Natural killer cell (primary cell): ENCODE measurements at regions of chr11 and their contacts with region 1.

Region 1: DNA sequence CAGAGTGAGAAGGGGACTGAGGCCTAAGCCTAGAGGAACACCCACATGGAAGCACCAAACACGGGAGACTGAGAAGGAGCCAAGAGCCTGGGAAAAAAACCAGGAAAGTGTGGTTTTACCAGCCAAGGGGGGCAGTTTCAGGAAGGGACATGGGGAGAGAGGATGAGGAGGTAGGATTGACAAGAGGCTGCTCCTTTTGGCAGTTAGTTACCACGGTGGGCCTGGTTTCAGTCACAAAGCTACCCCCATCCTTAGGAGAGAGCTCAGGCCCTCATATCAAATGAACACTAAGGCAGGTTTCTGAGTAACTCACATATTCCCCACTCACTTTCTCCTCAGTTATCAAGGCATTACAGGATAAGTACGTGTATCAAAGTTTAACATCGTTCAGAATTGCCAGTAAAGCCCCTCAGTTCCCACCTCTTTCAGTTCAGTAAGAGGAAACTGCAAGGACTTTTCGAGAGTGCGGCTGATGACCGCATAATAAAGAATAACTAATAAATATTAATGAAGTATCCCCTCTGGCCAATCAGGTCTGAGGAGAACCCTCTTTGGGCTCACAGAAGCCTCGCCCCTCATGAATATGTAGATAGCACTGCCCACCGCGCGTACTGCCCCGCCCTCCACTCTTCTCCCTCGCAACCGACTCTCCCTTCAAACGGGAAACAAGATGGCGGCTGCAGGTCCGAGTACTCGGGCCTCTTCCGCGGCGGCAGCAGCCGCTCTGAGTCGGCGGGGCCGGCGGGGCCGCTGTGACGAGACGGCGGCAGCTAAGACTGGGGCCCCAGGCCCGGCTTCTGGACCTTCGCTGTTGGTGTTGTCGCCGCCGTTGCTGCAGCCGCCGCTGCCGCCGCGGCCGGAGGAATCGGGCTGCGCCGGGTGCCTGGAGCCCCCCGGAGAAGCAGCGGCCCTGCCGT is at the start of gene RNF169:
- DNase-seq: peak; percentile 87 to 95
- ATAC-seq: peak; percentile 97 to 99 (median 97)
- H3K4me3 ChIP-seq: peak within 1 kb of the TSS; percentile 73
- H3K4me3 Mint-ChIP-seq: peak within 1 kb of the TSS; percentile 95
- H3K27ac ChIP-seq: peak within 1 kb of the TSS; percentile 95
- H3K27ac Mint-ChIP-seq: peak within 1 kb of the TSS; percentile 87 to 93
- H3K4me1 ChIP-seq: peaks cover 25% of the 10 kb centered on the region
- H3K4me1 Mint-ChIP-seq: peaks cover 20 to 33% of the 10 kb centered on the region in 2 donors
- H3K27me3 ChIP-seq: no peaks in the 10 kb centered on the region
- H3K27me3 Mint-ChIP-seq: no peaks in the 10 kb centered on the region
- CTCF ChIP-seq: no peak
- total RNA-seq, gene RNF169: 29.1 to 39.8 (median 37.9) TPM

Region 2: DNA sequence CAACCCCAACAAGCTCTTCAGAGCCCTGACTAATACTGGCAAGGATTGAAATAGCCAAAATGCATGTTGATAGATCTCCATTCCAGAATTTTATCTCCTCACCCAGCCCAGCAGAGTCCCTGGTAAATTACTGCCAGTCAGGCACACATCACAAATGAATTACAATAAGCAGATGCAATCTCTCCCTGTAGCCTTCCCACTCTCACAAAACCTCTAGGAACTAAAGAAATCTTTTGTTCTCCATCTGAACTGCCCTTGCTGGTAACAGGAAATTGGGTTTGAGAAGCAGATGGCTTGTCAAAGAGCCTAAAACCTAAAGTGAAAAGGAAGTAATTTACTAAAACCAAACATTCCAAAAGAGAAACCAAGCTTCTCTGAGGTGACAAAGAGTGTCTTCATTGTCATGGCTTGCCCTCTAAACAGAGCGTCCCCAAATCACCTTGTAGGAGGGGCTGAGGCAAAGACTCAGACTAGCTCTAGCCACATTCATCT is 1210.0 kb before region 1 on chr11:
- intact Hi-C with region 1: no loop called
- DNase-seq: peak in 1 of 2 donors; percentile 26
- ATAC-seq: peak; percentile 56 to 70 (median 64)
- H3K4me3 ChIP-seq: no peak overlapping the region
- H3K4me3 Mint-ChIP-seq: peak overlapping the region; percentile 25
- H3K27ac ChIP-seq: peak overlapping the region; percentile 4
- H3K27ac Mint-ChIP-seq: peak overlapping the region; percentile 76 to 77
- H3K4me1 ChIP-seq: peaks cover 10% of the 10 kb centered on the region
- H3K4me1 Mint-ChIP-seq: peaks cover 23 to 25% of the 10 kb centered on the region in 2 donors
- H3K27me3 ChIP-seq: no peaks in the 10 kb centered on the region
- H3K27me3 Mint-ChIP-seq: no peaks in the 10 kb centered on the region
- CTCF ChIP-seq: no peak

Region 3: GRCh38 chr11:74783241-74783871 is 34.9 kb after region 1 on chr11:
- intact Hi-C with region 1: loop called (anchors 2 kb)
- DNase-seq: peak in 1 of 2 donors; percentile 66
- ATAC-seq: peak; percentile 73 to 83 (median 79)
- H3K4me3 ChIP-seq: peak overlapping the region; percentile 2
- H3K4me3 Mint-ChIP-seq: peak overlapping the region; percentile 85
- H3K27ac ChIP-seq: peak overlapping the region; percentile 74
- H3K27ac Mint-ChIP-seq: peak overlapping the region in 1 of 2 donors; percentile 89
- H3K4me1 ChIP-seq: peaks cover 14% of the 10 kb centered on the region
- H3K4me1 Mint-ChIP-seq: peaks cover 38 to 39% of the 10 kb centered on the region in 2 donors
- H3K27me3 ChIP-seq: no peaks in the 10 kb centered on the region
- H3K27me3 Mint-ChIP-seq: no peaks in the 10 kb centered on the region
- CTCF ChIP-seq: no peak

Region 4: GRCh38 chr11:74820763-74821162 is 72.3 kb after region 1 on chr11:
- intact Hi-C with region 1: loop called (anchors 1 kb)
- DNase-seq: no peak
- ATAC-seq: peak; percentile 36 to 69 (median 55)
- H3K4me3 ChIP-seq: no peak overlapping the region
- H3K4me3 Mint-ChIP-seq: peak overlapping the region; percentile 30
- H3K27ac ChIP-seq: no peak overlapping the region
- H3K27ac Mint-ChIP-seq: peak overlapping the region; percentile 74 to 89
- H3K4me1 ChIP-seq: peaks cover 11% of the 10 kb centered on the region
- H3K4me1 Mint-ChIP-seq: peaks cover 68 to 82% of the 10 kb centered on the region in 2 donors
- H3K27me3 ChIP-seq: no peaks in the 10 kb centered on the region
- H3K27me3 Mint-ChIP-seq: no peaks in the 10 kb centered on the region
- CTCF ChIP-seq: no peak